ENCODE measurements at regions of chr4 and their contacts with region 1.

Region 1: GRCh38 chr4:139295206-139295941 is 5.9 kb upstream of the NAA15 start:
- DNase-seq: peak; percentile 95 to 100 (median 98)
- ATAC-seq: peak; percentile 92
- H3K4me3 ChIP-seq: peak overlapping the region; percentile 94
- H3K4me3 Mint-ChIP-seq: peak overlapping the region; percentile 96
- H3K27ac ChIP-seq: peak overlapping the region; percentile 77 to 84
- H3K27ac Mint-ChIP-seq: peak overlapping the region; percentile 92
- H3K4me1 ChIP-seq: peaks cover 15% of the 10 kb centered on the region
- H3K4me1 Mint-ChIP-seq: peaks cover 33% of the 10 kb centered on the region
- H3K27me3 ChIP-seq: no peaks in the 10 kb centered on the region
- H3K27me3 Mint-ChIP-seq: no peaks in the 10 kb centered on the region
- CTCF ChIP-seq: peak; percentile 87

Region 2: DNA sequence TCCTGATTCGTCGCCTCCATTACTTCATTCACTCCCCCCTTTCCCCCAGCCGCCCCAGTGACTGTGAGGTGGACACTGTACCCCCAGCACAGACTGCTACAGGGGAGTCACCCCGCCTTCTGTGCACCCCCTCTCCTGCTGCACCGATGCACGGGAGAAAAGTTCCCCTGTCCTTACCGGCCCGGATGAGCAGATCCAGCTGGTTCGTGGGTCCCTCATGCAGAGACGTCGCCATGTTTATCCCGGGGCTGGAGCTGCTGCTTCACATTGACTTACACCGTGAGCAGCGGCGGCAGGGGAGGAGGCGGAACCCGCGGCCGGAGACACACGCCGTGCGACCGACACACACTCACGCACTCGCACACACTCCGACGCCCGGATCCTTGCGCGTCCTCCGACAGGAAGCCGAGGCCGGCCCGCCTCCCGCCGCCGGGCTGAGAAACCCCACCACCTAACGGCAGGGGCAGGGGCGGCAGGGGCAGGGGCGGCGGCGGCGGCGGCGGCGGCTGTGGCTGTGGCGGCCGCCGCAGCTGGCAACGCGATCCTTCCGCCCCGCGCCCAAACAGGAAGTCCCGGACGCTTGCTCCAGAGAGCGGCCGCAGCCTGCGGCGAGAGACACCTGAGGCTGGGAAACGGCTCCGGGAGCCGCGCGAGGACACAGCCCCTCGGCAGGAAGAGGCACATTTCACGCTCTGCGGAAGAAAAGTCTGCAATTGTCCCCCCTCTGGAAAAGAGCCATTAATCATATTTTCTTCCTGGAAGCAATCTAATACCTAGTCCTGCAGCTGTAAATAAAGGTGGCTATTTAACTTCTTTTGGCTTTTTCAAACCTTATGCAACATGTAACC is 211.2 kb before region 1 on chr4:
- CTCF ChIA-PET with region 1: interaction called, 6 read pairs
- POLR2A ChIA-PET with region 1: interaction called, 61 read pairs
- intact Hi-C with region 1: loop called in 1 of 2 experiments (anchors 5 kb)
- DNase-seq: peak; percentile 65 to 94 (median 80)
- ATAC-seq: peak; percentile 44
- H3K4me3 ChIP-seq: peak overlapping the region; percentile 93
- H3K4me3 Mint-ChIP-seq: peak overlapping the region; percentile 93
- H3K27ac ChIP-seq: peak overlapping the region; percentile 94 to 96
- H3K27ac Mint-ChIP-seq: peak overlapping the region; percentile 92
- H3K4me1 ChIP-seq: peaks cover 5% of the 10 kb centered on the region
- H3K4me1 Mint-ChIP-seq: peaks cover 55% of the 10 kb centered on the region
- H3K27me3 ChIP-seq: no peaks in the 10 kb centered on the region
- H3K27me3 Mint-ChIP-seq: no peaks in the 10 kb centered on the region
- CTCF ChIP-seq: no peak

Region 3: DNA sequence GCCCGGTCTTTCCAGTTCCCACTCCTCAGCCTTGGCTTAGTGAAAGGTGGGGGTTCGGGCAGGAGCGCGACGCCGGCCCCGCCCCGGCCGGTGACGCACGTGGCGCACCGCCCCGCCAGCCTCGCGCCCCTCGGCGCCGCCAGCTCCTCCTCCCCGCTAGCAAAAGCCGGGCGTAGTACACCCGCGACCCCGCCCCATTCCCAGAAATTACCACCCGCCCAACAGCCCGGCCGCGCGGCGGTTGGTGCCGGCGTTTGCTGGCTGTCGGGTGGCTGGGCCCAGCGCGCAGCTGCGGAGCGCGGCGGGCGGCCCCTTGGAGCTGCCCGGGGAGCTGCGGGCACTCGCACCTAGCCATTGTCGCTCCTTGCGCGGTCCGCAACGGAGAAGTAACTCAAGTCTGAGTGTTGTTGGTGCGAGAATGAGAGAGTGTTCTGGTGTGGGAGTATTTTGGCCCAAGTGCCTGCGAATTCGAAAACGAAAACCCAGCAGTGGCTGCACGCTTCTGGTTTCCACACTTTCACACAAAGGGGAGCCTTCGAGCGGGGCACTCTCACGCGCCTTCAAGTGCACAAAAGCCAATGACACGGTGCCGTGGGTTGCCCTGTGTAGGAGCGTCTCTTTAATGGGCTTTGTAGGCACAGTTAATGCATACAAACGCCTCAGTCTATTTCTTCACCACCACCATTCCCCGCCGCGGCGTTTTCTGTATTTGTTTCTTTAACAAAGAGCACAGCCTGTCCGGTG is 117.3 kb before region 1 on chr4:
- CTCF ChIA-PET with region 1: interaction called, 7 read pairs
- POLR2A ChIA-PET with region 1: interaction called, 57 read pairs
- intact Hi-C with region 1: loop called (anchors 2 kb)
- DNase-seq: peak; percentile 80 to 96 (median 90)
- ATAC-seq: peak; percentile 74
- H3K4me3 ChIP-seq: peak overlapping the region; percentile 85
- H3K4me3 Mint-ChIP-seq: peak overlapping the region; percentile 96
- H3K27ac ChIP-seq: peak overlapping the region; percentile 77 to 88
- H3K27ac Mint-ChIP-seq: peak overlapping the region; percentile 93
- H3K4me1 ChIP-seq: peaks cover 18% of the 10 kb centered on the region
- H3K4me1 Mint-ChIP-seq: peaks cover 26% of the 10 kb centered on the region
- H3K27me3 ChIP-seq: no peaks in the 10 kb centered on the region
- H3K27me3 Mint-ChIP-seq: no peaks in the 10 kb centered on the region
- CTCF ChIP-seq: no peak

Region 4: DNA sequence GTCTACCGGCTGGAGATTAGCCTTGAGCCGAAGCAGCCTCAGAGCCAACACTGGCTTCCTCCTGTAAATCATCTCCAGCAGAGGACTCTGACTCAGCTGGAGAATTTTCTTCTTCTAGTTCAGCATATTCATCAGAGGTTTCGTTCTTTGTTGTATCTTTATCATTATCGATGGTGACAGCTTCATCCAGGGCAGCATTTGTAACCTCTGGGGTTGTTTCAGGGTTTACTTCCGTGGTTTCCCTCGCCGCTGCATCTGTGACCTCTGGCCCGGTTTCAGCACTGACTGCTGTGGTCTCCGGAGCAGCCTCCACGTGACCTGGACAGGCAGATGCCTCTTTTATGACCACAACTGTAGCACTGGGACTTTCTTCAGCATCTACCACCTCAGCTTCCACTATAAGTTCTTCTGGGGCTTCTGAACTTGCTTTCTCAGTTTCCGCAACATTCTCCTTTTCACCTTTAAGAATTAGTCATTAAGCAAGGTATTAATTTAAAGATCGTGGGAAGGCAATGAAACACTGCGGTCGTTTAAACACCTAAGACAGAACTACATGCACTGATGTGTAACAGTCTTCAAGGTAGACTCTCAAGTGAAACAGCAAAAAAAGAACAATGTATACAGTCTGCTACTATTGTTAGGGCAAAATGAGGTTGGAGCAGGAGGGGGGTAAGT is 28.7 kb before region 1 on chr4:
- CTCF ChIA-PET with region 1: interaction called, 11 read pairs
- POLR2A ChIA-PET with region 1: interaction called, 9 read pairs
- intact Hi-C with region 1: loop called in 1 of 2 experiments (anchors 2 kb)
- DNase-seq: peak; percentile 13 to 90 (median 49)
- ATAC-seq: peak; percentile 86
- H3K4me3 ChIP-seq: peak overlapping the region; percentile 32
- H3K4me3 Mint-ChIP-seq: peak overlapping the region; percentile 78
- H3K27ac ChIP-seq: no peak overlapping the region
- H3K27ac Mint-ChIP-seq: peak overlapping the region; percentile 14
- H3K4me1 ChIP-seq: peaks cover 7% of the 10 kb centered on the region
- H3K4me1 Mint-ChIP-seq: peaks cover 17% of the 10 kb centered on the region
- H3K27me3 ChIP-seq: no peaks in the 10 kb centered on the region
- H3K27me3 Mint-ChIP-seq: no peaks in the 10 kb centered on the region
- CTCF ChIP-seq: no peak

Region 5: DNA sequence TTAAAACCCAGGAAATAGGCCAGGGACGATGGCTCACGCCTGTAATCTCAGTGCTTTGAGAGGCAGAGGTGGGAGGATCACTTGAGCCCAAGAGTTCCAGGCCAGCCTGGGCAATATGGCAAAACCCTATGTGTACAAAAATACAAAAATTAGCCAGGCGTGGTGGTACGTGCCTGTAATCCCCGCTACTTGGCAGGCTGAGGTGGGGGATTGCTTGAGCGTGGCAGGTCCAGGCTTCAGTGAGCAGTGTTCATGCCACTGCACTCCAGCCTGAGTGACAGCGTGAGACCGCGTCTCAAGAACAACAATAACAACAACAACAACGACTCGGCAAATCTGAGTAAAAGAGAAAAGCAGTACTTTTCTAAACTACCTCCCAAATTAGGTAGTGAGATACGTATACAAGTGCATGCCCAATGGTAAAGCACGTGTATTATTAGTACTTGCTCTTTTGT is 19.9 kb after region 1 on chr4:
- CTCF ChIA-PET with region 1: interaction called, 15 read pairs
- POLR2A ChIA-PET with region 1: interaction called, 21 read pairs
- intact Hi-C with region 1: no loop called
- DNase-seq: no peak
- ATAC-seq: no peak
- H3K4me3 ChIP-seq: no peak overlapping the region
- H3K4me3 Mint-ChIP-seq: peak overlapping the region; percentile 47
- H3K27ac ChIP-seq: peak overlapping the region in 1 of 2 donors; percentile 59
- H3K27ac Mint-ChIP-seq: peak overlapping the region; percentile 60
- H3K4me1 ChIP-seq: peaks cover 52% of the 10 kb centered on the region
- H3K4me1 Mint-ChIP-seq: peaks cover 81% of the 10 kb centered on the region
- H3K27me3 ChIP-seq: no peaks in the 10 kb centered on the region
- H3K27me3 Mint-ChIP-seq: no peaks in the 10 kb centered on the region
- CTCF ChIP-seq: no peak

Region 6: DNA sequence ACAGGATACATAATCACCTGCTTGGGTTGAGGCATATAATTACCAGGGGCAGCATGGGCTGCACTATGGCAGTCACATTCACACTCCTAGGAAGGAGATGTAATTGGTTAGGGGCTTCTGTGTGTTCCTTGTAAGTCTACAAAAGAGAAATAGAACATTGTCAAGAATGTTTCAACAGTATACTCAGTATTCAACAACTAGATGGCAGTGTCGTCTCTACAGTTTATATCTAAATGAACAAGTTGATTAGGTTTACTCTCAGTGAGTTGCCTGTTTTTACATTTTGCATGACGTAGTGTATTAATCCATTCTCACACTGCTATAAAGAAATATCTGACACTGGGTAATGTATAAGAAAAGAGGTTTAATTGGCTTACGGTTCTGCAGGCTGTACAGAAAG is 108.1 kb after region 1 on chr4:
- CTCF ChIA-PET with region 1: no interaction called
- POLR2A ChIA-PET with region 1: no interaction called
- intact Hi-C with region 1: no loop called
- DNase-seq: no peak
- ATAC-seq: no peak
- H3K4me3 ChIP-seq: no peak overlapping the region
- H3K4me3 Mint-ChIP-seq: no peak overlapping the region
- H3K27ac ChIP-seq: no peak overlapping the region
- H3K27ac Mint-ChIP-seq: no peak overlapping the region
- H3K4me1 ChIP-seq: no peaks in the 10 kb centered on the region
- H3K4me1 Mint-ChIP-seq: no peaks in the 10 kb centered on the region
- H3K27me3 ChIP-seq: no peaks in the 10 kb centered on the region
- H3K27me3 Mint-ChIP-seq: no peaks in the 10 kb centered on the region
- CTCF ChIP-seq: no peak

Measured in CD4-positive, alpha-beta T cell (primary cell).